Right lobe of liver (tissue), 6 donors: ENCODE measurements at regions of chr19 and their contacts with region 1.

Region 1: GRCh38 chr19:18450931-18451845 is 13.3 kb upstream of the ISYNA1 start:
- DNase-seq: peak; percentile 81 to 84 (median 84)
- ATAC-seq: peak; percentile 77 to 86 (median 82)
- H3K4me3 ChIP-seq: no peak overlapping the region
- H3K27ac ChIP-seq: no peak overlapping the region
- H3K4me1 ChIP-seq: peaks cover 0 to 12% (median 4%) of the 10 kb centered on the region in 4 donors
- H3K27me3 ChIP-seq: no peaks in the 10 kb centered on the region
- CTCF ChIP-seq: peak; percentile 97 to 99 (median 98)
- POLR2A ChIP-seq: no peak

Region 2: DNA sequence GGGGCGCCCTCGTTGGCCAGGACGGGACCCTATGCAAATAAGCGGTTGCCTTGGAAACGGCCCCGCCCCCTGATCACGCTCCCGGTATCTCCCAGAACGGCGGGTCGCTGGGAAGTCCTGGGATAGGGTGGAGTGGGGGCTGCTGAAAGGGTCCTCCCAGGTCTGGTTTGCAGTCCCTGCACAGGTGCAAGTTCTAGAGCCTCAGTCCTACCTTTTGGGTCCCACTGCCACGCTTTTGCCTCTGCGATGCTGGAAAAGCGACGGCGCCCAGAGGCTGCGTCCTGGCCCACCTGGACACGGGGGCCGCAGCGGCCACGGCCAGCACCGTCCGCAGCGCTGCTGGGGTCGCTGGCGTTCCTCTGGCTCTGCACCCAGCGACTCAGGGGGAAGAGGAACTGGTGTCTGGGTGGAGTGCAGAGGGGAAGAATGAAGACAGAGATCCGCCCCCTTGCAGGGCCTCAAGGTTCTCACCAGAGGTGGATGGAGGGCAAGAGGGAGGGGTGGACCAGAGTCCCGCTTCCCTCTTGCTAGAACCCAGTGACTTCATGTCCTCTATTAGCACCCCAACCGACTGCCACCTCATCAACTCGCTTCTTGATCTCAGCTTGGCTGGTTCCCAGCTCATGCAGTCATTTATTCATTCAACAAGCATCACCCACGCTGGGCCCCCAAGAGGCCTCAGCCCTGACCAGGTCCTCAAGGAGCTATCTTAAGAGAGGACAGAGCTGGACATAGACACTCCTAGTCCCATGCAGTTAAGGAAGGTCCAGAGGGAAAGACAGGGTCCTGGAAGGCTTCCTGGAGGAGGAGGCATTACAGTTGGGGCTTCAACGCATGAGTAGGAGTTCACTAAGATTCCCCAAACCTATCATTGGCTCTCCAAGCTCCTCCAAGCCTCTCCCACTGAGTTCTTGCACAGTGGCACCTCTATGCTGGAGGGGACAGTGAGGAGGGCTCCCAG is 53.7 kb before region 1 on chr19 and contains the start of gene LRRC25:
- intact Hi-C with region 1: no loop called
- DNase-seq: peak; percentile 55 to 74 (median 63)
- ATAC-seq: peak; percentile 24 to 44 (median 32)
- H3K4me3 ChIP-seq: peak within 1 kb of the TSS; percentile 10 to 38 (median 30)
- H3K27ac ChIP-seq: peak within 1 kb of the TSS; percentile 27 to 79 (median 45)
- H3K4me1 ChIP-seq: peaks cover 0 to 49% (median 9%) of the 10 kb centered on the region in 4 donors
- H3K27me3 ChIP-seq: no peaks in the 10 kb centered on the region
- CTCF ChIP-seq: no peak
- POLR2A ChIP-seq: peak; percentile 64
- total RNA-seq, gene LRRC25: 1.9 to 12.6 (median 3.2) TPM

Region 3: DNA sequence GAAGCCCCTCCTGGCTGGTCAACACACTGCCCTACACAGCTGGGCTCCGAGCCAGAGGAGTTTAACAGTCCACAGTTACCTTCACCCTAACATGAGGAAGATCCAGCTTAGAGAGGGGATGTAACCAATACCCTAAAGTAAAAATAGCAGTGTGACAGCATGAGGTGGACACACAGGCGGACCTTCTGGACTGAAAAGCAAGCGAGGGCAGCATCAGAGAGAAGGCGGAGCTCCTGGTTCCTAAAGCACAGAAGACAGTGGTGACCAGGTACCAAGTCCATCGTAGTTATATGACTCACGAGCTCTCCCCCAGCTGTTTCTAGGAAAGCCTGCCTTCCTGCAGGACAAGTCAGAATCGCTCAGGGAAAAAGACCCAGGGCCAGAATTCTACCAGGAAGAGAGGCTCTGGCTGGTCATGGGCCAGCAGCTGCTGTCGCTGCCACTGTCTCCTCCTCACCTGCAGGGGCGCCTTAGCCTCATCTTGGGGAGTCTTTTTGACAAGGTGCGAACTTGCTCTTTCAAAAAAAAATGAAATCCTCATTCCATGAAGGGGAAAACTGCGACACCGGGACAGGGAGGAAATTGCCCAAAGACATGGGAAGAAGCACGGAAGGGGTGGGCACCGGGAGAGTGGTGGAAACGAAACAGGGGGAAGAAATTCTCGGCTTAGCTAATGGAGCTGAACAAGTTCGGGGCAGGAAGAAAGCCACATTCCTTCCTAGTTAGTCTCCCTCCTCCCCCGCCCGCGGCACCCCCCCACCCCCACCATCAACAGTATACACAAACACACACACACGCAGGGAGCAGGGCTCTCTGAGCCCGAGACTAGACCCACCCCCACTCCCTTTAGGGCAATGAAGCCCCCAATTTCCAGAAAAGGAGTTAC is 69.0 kb after region 1 on chr19:
- intact Hi-C with region 1: loop called in 1 of 2 experiments (anchors 10 kb)
- DNase-seq: peak; percentile 72 to 80 (median 79)
- ATAC-seq: peak; percentile 2 to 37 (median 8)
- H3K4me3 ChIP-seq: peak overlapping the region; percentile 96 to 99 (median 99)
- H3K27ac ChIP-seq: peak overlapping the region; percentile 98 to 99 (median 99)
- H3K4me1 ChIP-seq: peaks cover 3 to 48% (median 16%) of the 10 kb centered on the region in 4 donors
- H3K27me3 ChIP-seq: no peaks in the 10 kb centered on the region
- CTCF ChIP-seq: peak; percentile 55 to 63 (median 58)
- POLR2A ChIP-seq: peak; percentile 76

Region 4: DNA sequence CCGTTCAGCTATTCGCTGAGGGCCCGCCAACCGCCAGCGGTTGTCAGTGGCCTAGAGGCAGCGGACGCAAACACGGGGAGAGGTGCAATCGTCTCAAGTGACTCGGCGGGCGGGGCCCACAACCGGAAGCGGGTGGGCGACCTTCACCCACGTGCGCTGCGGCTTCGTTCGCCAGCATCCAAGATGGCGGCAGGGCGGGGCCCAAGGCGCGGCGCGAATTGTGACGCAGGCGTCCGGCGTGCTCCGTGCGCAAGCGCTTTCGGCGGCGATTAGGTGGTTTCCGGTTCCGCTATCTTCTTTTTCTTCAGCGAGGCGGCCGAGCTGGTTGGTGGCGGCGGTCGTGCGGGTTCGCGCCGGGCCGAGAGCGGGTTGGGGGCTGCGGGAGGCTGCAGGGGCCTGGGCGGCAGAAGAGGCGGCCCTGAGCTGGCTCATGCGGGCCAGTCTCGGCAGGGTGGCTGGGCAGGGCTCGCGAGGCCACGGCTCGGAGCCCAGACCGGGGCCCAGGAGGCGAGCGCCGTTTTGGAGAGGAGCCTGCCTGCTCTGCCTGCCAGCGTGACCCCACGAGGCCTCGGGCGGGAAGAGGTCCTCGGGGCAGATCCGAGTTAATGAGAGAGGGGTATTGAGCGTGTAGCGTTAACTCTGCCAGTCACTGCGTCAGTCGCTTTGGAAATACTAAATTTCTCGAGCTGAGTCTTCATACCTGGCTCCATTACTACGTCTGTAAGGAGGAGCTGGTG is 120.5 kb after region 1 on chr19 and contains the start of gene UBA52:
- intact Hi-C with region 1: loop called in 1 of 2 experiments (anchors 10 kb)
- DNase-seq: peak; percentile 98
- ATAC-seq: peak; percentile 97 to 99 (median 97)
- H3K4me3 ChIP-seq: peak within 1 kb of the TSS; percentile 97 to 99 (median 98)
- H3K27ac ChIP-seq: peak within 1 kb of the TSS; percentile 64 to 88 (median 85)
- H3K4me1 ChIP-seq: peaks cover 0 to 16% (median 5%) of the 10 kb centered on the region in 4 donors
- H3K27me3 ChIP-seq: no peaks in the 10 kb centered on the region
- CTCF ChIP-seq: peak in 1 of 4 donors; percentile 17
- POLR2A ChIP-seq: peak; percentile 79
- total RNA-seq, gene UBA52: 256 to 470 (median 406) TPM